Activated CD4-positive, alpha-beta T cell treated with anti-CD3 and anti-CD28 coated beads, Interleukin-2, amount 10 ng/mL, durations not matched to agents 24 days and 14 days (primary cell): ENCODE measurements at regions of chrX and their contacts with region 1.

Region 1: DNA sequence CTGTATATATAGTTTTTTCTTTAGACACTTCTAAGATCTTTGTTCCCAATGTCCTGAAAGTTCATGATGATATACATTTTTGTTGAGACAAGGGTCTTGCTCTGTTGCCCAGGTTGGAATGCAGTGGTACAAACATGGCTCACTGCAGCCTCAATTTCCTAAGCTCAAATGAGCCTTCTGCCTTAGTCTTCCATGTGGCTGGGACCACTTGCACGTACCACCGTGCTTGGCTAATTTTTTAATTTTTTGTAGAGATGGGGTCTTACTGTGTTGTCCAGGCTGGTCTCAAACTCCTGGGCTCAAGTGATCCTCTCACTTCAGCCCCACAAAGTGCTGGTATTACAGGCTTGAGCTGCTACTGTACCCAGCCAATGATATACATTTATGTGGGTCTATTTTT is 132.9 kb upstream of the BCOR start:
- DNase-seq: no peak
- H3K4me3 Mint-ChIP-seq: no peak overlapping the region
- H3K27ac Mint-ChIP-seq: no peak overlapping the region
- H3K4me1 Mint-ChIP-seq: no peaks in the 10 kb centered on the region
- H3K27me3 Mint-ChIP-seq: no peaks in the 10 kb centered on the region

Region 2: GRCh38 chrX:40213092-40213491 is 17.6 kb before region 1 on chrX:
- intact Hi-C with region 1: loop called (anchors 1 kb)
- DNase-seq: no peak
- H3K4me3 Mint-ChIP-seq: no peak overlapping the region
- H3K27ac Mint-ChIP-seq: no peak overlapping the region
- H3K4me1 Mint-ChIP-seq: no peaks in the 10 kb centered on the region
- H3K27me3 Mint-ChIP-seq: no peaks in the 10 kb centered on the region

Region 3: GRCh38 chrX:40433160-40433559 is 202.5 kb after region 1 on chrX:
- intact Hi-C with region 1: no loop called
- DNase-seq: no peak
- H3K4me3 Mint-ChIP-seq: no peak overlapping the region
- H3K27ac Mint-ChIP-seq: no peak overlapping the region
- H3K4me1 Mint-ChIP-seq: no peaks in the 10 kb centered on the region
- H3K27me3 Mint-ChIP-seq: no peaks in the 10 kb centered on the region